OCI-LY7 (cell line): ENCODE measurements at regions of chr10 and their contacts with region 1.

Region 1: DNA sequence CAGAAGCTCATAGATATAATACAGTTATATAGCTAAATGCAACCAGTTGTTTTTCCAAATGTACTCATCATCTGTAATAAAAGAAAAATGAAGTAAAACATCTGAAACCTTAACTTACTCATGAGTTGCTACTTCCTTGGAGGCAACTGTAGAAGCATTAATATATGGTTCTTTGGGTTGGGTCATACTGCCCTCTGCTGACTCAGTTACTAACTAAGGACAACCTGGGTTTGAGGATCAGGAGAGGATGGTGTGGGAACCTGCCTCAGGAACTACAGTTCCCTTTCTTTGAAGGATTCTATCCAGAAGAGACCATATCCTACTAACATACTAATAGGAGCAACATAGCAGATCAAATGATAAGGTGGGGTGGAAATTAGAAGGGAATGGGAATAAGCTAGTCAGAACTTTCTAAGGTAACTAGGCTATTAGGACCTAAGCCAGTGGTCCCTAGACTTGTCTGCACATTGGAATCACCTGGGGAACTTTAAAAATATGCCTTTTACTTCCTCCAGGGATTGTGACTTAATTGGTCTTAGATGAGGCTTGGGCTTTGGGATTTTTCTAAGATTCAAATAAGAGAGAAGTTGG is 20.7 kb downstream of the COX15 start:
- DNase-seq: peak; percentile 62
- H3K4me3 ChIP-seq: no peak overlapping the region
- H3K27ac ChIP-seq: no peak overlapping the region
- H3K4me1 ChIP-seq: no peaks in the 10 kb centered on the region
- CTCF ChIP-seq: peak; percentile 86

Region 2: DNA sequence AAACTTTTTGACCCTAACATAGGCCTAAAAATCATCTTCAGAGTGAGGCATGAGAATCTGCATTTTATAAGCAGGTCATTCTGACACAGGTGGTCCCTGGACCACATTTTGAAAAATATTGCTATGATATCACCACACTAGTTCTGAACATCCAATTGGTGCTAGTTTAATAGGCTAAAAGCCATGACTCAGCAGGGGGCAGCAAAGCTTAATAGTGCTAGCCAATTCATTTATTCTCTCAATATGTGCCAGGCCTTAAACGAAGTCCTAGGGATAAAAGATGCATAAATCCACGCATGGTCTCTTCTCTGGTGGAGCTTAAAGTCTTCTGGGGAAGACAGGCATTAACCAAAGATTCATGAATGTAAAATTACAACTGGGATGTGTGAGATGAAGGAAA is 80.8 kb before region 1 on chr10:
- CTCF ChIA-PET with region 1: no interaction called
- POLR2A ChIA-PET with region 1: no interaction called
- intact Hi-C with region 1: loop called (anchors 1 kb)
- DNase-seq: peak; percentile 33
- H3K4me3 ChIP-seq: no peak overlapping the region
- H3K27ac ChIP-seq: no peak overlapping the region
- H3K4me1 ChIP-seq: no peaks in the 10 kb centered on the region
- CTCF ChIP-seq: peak; percentile 76

Region 3: GRCh38 chr10:99859585-99859984 is 148.4 kb after region 1 on chr10:
- CTCF ChIA-PET with region 1: no interaction called
- POLR2A ChIA-PET with region 1: no interaction called
- intact Hi-C with region 1: no loop called
- DNase-seq: peak; percentile 67
- H3K4me3 ChIP-seq: no peak overlapping the region
- H3K27ac ChIP-seq: no peak overlapping the region
- H3K4me1 ChIP-seq: no peaks in the 10 kb centered on the region
- CTCF ChIP-seq: peak; percentile 79